ENCODE measurements at regions of chr3 and their contacts with region 1.

Region 1: GRCh38 chr3:82133070-82133606 is 371.7 kb upstream of the GBE1 start:
- DNase-seq: peak; percentile 9
- H3K4me3 Mint-ChIP-seq: no peak overlapping the region
- H3K27ac Mint-ChIP-seq: no peak overlapping the region
- H3K4me1 Mint-ChIP-seq: no peaks in the 10 kb centered on the region
- H3K27me3 Mint-ChIP-seq: no peaks in the 10 kb centered on the region

Region 2: GRCh38 chr3:81490541-81491288 is 642.4 kb before region 1 on chr3:
- intact Hi-C with region 1: loop called (anchors 2 kb)
- DNase-seq: peak; percentile 51
- H3K4me3 Mint-ChIP-seq: no peak overlapping the region
- H3K27ac Mint-ChIP-seq: no peak overlapping the region
- H3K4me1 Mint-ChIP-seq: no peaks in the 10 kb centered on the region
- H3K27me3 Mint-ChIP-seq: no peaks in the 10 kb centered on the region

Region 3: DNA sequence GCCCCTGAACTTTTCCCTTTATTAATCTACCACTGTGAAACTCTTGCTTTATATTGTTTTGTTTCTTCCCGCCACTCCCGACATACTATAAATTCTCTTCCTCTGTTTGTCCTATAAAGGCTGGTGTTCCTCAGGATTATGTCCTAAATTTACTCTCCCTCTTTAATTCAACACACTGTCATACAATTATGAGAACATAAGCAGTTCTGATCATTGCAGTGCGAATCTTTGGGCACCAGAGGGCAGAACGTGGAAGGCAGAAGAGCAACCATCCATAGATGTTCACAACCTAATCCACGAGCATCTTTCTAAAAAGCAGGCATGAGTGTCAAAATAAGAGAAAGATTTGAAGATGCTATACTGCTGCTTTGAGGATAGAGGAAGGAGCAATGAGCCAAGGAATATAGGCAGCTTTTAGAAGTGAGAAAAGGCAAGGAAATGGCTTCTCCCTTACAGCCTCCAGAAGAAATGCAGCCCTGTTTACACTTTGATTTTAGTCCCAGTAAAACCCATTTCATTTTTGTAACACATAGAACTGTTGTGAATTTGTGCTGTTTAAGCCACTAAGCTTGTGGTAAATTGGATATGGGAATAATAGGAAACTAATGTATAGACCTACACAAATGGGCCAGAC is 551.1 kb before region 1 on chr3:
- intact Hi-C with region 1: loop called (anchors 10 kb)
- DNase-seq: no peak
- H3K4me3 Mint-ChIP-seq: no peak overlapping the region
- H3K27ac Mint-ChIP-seq: no peak overlapping the region
- H3K4me1 Mint-ChIP-seq: peaks cover 1% of the 10 kb centered on the region
- H3K27me3 Mint-ChIP-seq: no peaks in the 10 kb centered on the region

Region 4: DNA sequence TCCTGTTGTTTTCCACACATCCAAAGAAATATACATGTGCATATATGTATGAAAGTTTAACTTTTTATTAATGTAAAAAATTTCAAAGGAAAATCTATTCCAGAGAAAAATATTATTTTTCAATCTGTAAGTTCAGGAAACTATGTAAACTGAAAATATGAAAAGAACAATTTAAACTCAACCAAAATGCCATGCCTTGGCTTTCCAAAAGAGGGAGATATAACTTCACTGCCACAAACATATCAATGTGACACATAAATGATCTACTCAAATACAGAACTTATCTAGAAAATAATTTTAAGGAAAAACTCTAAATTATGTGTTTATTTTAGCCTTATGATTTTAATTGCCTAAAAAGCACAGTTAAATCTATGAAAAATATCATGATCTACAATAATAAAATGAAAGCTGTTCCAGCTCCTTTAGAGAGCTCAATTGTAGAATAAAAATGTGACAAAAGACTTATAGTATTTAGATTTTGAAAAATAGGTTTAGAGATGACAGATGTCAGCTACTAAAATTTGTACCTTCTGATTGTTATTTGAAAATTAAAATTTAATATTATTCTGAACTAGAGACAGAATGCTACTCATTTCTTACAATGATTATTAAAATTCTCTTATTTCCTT is 466.5 kb before region 1 on chr3:
- intact Hi-C with region 1: loop called (anchors 2 kb)
- DNase-seq: no peak
- H3K4me3 Mint-ChIP-seq: no peak overlapping the region
- H3K27ac Mint-ChIP-seq: no peak overlapping the region
- H3K4me1 Mint-ChIP-seq: peaks cover 2% of the 10 kb centered on the region
- H3K27me3 Mint-ChIP-seq: no peaks in the 10 kb centered on the region

Region 5: GRCh38 chr3:81808900-81809299 is 324.2 kb before region 1 on chr3:
- intact Hi-C with region 1: no loop called
- DNase-seq: no peak
- H3K4me3 Mint-ChIP-seq: no peak overlapping the region
- H3K27ac Mint-ChIP-seq: no peak overlapping the region
- H3K4me1 Mint-ChIP-seq: no peaks in the 10 kb centered on the region
- H3K27me3 Mint-ChIP-seq: no peaks in the 10 kb centered on the region

Measured in activated T-helper 2 cell treated with anti-CD3 and anti-CD28 coated beads, Interferon-gamma antibody, Interleukin-2, Interleukin-4, amounts not matched to agents 10 μg/mL and 5 μg/mL and 100 μg/mL, durations not matched to agents 14 hours and 24 hours and 36 hours (primary cell).